Colonic mucosa (tissue), 4 donors: ENCODE measurements at regions of chr13 and their contacts with region 1.

Region 1: GRCh38 chr13:48094781-48095502 is at the start of gene MED4:
- DNase-seq: peak; percentile 97
- H3K4me3 ChIP-seq: peak within 1 kb of the TSS; percentile 94
- H3K27ac ChIP-seq: peak within 1 kb of the TSS; percentile 66
- H3K4me1 ChIP-seq: peaks cover 12% of the 10 kb centered on the region
- H3K27me3 ChIP-seq: no peaks in the 10 kb centered on the region
- CTCF ChIP-seq: peak; percentile 97
- total RNA-seq, gene MED4: 38.8 to 44.0 TPM

Region 2: DNA sequence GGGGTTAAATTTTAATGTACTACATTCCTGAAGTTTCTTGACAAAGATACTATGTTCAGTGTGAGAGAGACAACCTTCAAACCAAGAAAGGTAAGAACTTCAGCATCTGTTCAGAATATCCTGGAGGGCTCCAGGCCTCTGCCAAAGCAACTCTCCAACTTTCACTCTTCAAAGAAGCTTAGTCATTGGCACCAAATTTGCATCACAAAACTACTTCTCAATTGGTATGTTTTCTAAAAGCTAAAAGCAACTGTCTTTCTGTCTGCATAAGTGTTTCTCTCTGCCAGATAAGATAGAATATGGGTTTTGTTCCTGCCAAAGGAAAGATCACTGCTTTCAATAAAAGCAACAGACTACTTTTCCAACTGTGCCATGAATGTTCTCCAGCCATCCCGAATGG is 281.2 kb before region 1 on chr13:
- intact Hi-C with region 1: no loop called
- DNase-seq: no peak
- H3K4me3 ChIP-seq: no peak overlapping the region
- H3K27ac ChIP-seq: no peak overlapping the region
- H3K4me1 ChIP-seq: no peaks in the 10 kb centered on the region
- H3K27me3 ChIP-seq: no peaks in the 10 kb centered on the region
- CTCF ChIP-seq: no peak

Region 3: GRCh38 chr13:48037346-48038173 is 57.4 kb before region 1 on chr13 and contains the start of gene NUDT15:
- intact Hi-C with region 1: loop called (anchors 10 kb)
- DNase-seq: peak; percentile 94
- H3K4me3 ChIP-seq: peak within 1 kb of the TSS; percentile 60
- H3K27ac ChIP-seq: peak within 1 kb of the TSS; percentile 93
- H3K4me1 ChIP-seq: peaks cover 5% of the 10 kb centered on the region
- H3K27me3 ChIP-seq: no peaks in the 10 kb centered on the region
- CTCF ChIP-seq: peak; percentile 95
- total RNA-seq, gene NUDT15: 24.5 to 43.8 TPM